Activated T-helper 1 cell treated with anti-CD3 and anti-CD28 coated beads, Interleukin-12 subunit alpha, Interleukin-12 subunit beta, Interleukin-2, Interleukin-4 antibody, amounts not matched to agents 30 ng/mL and 10 ng/mL and 1 ng/mL, durations not matched to agents 14 hours and 24 hours and 36 hours (primary cell): ENCODE measurements at regions of chr19 and their contacts with region 1.

Region 1: GRCh38 chr19:3275583-3276340 is 51.3 kb downstream of the CELF5 start:
- DNase-seq: peak; percentile 76
- H3K4me3 Mint-ChIP-seq: peak overlapping the region; percentile 78
- H3K27ac Mint-ChIP-seq: peak overlapping the region; percentile 75
- H3K4me1 Mint-ChIP-seq: peaks cover 8% of the 10 kb centered on the region
- H3K27me3 Mint-ChIP-seq: peaks cover 11% of the 10 kb centered on the region

Region 2: GRCh38 chr19:3171894-3172672 is 103.7 kb before region 1 on chr19:
- intact Hi-C with region 1: no loop called
- DNase-seq: no peak
- H3K4me3 Mint-ChIP-seq: no peak overlapping the region
- H3K27ac Mint-ChIP-seq: no peak overlapping the region
- H3K4me1 Mint-ChIP-seq: peaks cover 22% of the 10 kb centered on the region
- H3K27me3 Mint-ChIP-seq: no peaks in the 10 kb centered on the region

Region 3: DNA sequence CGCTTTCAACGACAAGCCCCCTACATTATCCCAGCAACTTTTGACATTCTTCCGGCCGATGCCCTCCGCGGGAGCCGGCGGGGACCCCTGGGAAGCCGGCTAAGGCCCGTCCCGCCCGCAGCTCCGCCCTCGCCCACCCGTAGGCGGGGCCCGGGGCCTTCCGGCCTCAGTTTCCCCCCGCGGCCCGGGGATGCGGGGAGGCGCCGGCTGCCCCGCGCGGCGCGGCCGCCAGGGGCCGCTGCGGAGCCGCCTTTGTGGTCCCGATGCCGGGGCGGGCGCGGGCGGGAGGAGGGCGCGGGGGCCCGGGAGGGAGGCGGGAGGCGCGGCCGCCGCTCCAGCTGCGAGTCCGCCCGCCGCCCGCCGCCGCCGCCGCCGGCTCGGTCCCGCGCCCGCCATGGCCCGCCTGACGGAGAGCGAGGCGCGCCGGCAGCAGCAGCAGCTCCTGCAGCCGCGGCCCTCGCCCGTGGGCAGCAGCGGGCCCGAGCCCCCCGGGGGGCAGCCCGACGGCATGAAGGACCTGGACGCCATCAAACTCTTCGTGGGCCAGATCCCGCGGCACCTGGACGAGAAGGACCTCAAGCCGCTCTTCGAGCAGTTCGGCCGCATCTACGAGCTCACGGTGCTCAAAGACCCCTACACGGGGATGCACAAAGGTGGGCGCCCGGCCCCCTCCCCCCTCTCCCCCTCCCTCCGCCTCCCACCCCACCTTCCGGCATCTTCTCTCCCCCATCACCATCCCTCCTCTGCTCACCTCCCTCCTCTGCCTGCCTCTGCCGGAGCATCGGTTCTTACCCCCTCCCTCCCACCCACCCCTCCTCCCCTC is 51.2 kb before region 1 on chr19 and contains the start of gene CELF5:
- intact Hi-C with region 1: no loop called
- DNase-seq: peak; percentile 19
- H3K4me3 Mint-ChIP-seq: no peak within 1 kb of the TSS
- H3K27ac Mint-ChIP-seq: no peak within 1 kb of the TSS
- H3K4me1 Mint-ChIP-seq: no peaks in the 10 kb centered on the region
- H3K27me3 Mint-ChIP-seq: peaks cover 24% of the 10 kb centered on the region
- total RNA-seq, gene CELF5: 0.08 and 0.12 TPM in 2 replicates

Region 4: GRCh38 chr19:3253270-3253669 is 22.5 kb before region 1 on chr19:
- intact Hi-C with region 1: loop called (anchors 1 kb)
- DNase-seq: no peak
- H3K4me3 Mint-ChIP-seq: no peak overlapping the region
- H3K27ac Mint-ChIP-seq: no peak overlapping the region
- H3K4me1 Mint-ChIP-seq: no peaks in the 10 kb centered on the region
- H3K27me3 Mint-ChIP-seq: no peaks in the 10 kb centered on the region